ENCODE measurements at regions of chr12 and their contacts with region 1.

Region 1: DNA sequence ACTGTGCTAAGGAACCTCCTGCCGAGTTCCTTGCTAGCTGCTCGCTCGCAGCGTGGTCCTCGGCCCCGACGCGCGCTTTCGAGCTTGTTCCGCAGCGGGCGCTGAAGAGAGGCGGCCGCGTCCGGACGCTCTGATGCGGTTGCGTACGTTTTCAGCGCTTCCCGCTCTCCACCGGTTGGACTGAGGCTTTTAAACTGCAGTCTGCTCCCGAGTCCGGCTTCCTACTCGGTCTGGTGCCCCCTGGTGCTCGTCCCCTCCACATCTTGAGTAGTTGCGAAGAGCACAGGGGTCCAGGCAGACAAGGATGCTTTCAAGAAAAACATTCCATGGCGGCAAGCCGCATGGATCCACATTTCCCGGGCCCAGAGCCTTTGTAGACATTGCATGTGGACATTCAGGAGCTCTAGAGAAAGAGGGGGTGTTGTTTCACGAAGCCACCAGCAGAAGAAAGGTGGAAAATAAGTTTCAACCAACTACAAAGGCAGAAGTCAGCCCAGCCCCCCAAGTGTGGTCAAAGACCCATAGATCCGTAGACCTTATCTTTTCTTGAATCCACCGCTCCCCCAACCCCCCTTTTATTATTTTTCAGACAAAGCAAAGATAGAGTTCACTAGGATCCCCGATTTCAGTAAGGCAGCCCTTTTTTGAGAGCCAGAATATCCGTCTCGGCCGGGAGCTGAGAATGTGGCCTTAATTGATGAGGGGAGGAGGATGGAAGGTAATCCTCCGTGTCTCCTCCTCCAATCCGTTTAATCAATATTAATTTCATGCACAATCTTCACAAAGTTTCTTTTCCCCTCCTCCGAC is 984 bp upstream of the WNK1 start:
- DNase-seq: peak; percentile 93
- H3K4me3 Mint-ChIP-seq: no peak overlapping the region
- H3K27ac Mint-ChIP-seq: no peak overlapping the region
- H3K4me1 Mint-ChIP-seq: peaks cover 26% of the 10 kb centered on the region
- H3K27me3 Mint-ChIP-seq: no peaks in the 10 kb centered on the region

Region 2: DNA sequence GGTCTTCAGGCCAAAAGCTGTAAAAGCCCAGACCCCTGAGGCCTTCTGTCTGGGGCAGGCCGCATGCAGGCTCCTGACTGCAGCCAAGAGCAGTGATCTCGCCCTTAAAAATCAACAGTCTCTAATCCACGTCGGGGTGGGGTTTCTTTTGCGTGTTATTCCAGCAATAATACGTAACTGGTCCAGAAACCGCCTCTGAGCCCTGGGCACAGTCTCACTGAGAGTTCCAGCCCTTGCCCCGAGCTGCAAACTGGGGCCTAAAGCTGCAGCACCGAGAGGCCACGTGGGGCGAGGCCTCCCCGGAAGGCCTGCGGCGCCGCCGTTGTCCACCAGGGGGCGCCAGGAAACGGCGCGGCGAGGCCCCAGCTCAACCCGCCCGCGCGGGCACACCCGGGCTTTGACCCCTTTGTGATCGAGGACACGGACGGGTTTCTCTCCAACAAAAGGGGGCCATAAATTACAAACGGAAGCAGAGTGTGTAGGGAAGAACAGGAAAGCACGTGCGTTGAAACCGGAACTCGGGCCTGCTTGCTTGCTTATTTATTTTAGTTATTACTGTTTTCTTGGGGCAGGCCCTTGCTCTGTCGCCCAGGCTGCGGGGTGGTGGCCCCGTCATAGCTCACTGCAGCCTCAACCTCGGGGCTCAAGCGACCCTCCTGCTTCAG is 175.3 kb before region 1 on chr12:
- CTCF ChIA-PET with region 1: interaction called, 118 read pairs
- POLR2A ChIA-PET with region 1: interaction called, 64 read pairs
- DNase-seq: peak; percentile 88
- H3K4me3 Mint-ChIP-seq: peak overlapping the region; percentile 19
- H3K27ac Mint-ChIP-seq: peak overlapping the region; percentile 59
- H3K4me1 Mint-ChIP-seq: peaks cover 50% of the 10 kb centered on the region
- H3K27me3 Mint-ChIP-seq: peaks cover 2% of the 10 kb centered on the region

Region 3: DNA sequence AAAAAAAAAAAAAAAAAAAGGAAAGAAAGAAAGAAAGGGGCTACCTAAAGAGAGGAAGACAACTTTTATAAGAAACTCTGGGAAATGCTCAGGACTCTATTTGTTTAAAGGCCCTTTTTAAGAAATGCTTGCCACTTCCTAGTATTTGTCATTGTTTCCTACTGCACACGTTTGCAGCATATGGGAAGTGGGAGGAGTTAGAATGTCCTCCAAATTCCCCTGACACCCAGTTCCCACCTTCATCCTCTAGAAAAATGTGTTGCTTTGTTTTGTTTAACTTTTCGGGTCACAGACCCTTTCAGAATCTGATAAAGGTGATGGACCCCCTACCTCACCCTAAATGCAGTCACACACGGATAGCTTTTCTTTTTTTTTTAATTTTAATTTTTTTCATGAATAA is 129.0 kb before region 1 on chr12:
- CTCF ChIA-PET with region 1: interaction called, 14 read pairs
- POLR2A ChIA-PET with region 1: interaction called, 12 read pairs
- DNase-seq: no peak
- H3K4me3 Mint-ChIP-seq: no peak overlapping the region
- H3K27ac Mint-ChIP-seq: peak overlapping the region; percentile 78
- H3K4me1 Mint-ChIP-seq: peaks cover 51% of the 10 kb centered on the region
- H3K27me3 Mint-ChIP-seq: no peaks in the 10 kb centered on the region

Region 4: DNA sequence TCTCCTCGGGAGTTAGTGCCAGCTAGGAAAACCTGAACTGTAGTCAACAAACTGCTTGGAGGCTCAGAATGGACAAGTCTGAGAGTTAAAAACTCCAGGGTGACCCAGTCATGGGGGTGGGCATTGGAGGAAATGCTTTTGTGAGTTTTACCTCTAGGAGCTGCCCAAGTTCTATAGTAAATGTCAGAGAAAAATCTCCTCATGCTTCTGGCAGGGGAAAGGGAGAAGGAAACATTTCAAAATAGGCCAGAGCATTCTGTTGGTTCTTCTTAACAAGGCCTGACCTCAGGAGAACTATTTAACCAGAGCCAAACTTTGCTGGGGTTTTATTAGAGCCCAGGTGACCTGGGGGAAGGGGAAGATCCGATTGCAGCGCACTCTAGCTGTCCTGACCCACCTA is 100.4 kb before region 1 on chr12:
- CTCF ChIA-PET with region 1: interaction called, 39 read pairs
- POLR2A ChIA-PET with region 1: no interaction called
- DNase-seq: no peak
- H3K4me3 Mint-ChIP-seq: no peak overlapping the region
- H3K27ac Mint-ChIP-seq: no peak overlapping the region
- H3K4me1 Mint-ChIP-seq: peaks cover 6% of the 10 kb centered on the region
- H3K27me3 Mint-ChIP-seq: peaks cover 4% of the 10 kb centered on the region

Region 5: GRCh38 chr12:685388-685787 is 66.0 kb before region 1 on chr12:
- CTCF ChIA-PET with region 1: interaction called, 32 read pairs
- POLR2A ChIA-PET with region 1: interaction called, 51 read pairs
- DNase-seq: peak; percentile 90
- H3K4me3 Mint-ChIP-seq: peak overlapping the region; percentile 37
- H3K27ac Mint-ChIP-seq: peak overlapping the region; percentile 91
- H3K4me1 Mint-ChIP-seq: peaks cover 35% of the 10 kb centered on the region
- H3K27me3 Mint-ChIP-seq: no peaks in the 10 kb centered on the region

Region 6: GRCh38 chr12:779745-780734 is 28.6 kb after region 1 on chr12:
- CTCF ChIA-PET with region 1: interaction called, 7 read pairs
- POLR2A ChIA-PET with region 1: interaction called, 22 read pairs
- DNase-seq: no peak
- H3K4me3 Mint-ChIP-seq: peak overlapping the region; percentile 65
- H3K27ac Mint-ChIP-seq: peak overlapping the region; percentile 41
- H3K4me1 Mint-ChIP-seq: peaks cover 61% of the 10 kb centered on the region
- H3K27me3 Mint-ChIP-seq: no peaks in the 10 kb centered on the region

Region 7: DNA sequence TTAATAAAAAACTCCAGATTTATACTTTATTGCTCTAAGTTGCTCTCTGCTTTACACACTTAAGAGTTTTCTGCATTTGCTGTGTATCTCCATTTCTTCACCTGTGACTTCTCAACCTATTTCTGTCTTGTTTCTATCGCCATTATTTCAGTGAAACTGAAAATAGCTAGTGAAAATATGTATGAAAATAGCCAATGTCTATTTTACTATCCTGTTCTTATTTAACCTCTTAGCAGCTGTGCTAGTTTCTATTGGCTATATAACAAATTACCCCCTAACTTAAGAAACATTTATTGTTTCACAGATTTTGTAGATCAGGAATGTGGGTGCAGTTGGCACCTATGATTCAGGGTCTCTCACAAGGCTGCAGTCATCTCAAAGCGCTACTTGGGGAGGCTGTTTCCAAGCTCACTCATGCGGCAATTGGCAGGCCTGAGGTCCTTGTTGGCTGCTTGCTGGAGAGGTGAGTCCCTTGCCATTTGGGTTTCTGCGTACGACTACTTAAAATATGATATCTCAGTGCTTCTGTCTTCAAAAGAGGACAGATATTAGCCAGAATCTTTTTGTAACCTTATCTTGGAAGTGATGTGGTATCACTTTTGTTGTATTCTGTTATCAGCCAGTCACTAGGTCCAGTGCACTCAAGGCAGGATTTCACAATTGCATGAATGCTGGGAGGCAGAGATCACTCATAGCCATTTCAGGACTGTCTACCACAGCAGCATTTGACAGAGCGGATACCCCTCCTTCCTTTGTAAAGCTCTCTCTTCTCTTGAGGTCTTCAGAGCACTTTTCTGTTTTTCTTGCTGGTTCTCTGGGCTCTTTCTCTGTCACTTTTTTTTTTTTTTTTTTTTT is 246.9 kb after region 1 on chr12:
- CTCF ChIA-PET with region 1: no interaction called
- POLR2A ChIA-PET with region 1: no interaction called
- DNase-seq: no peak
- H3K4me3 Mint-ChIP-seq: no peak overlapping the region
- H3K27ac Mint-ChIP-seq: no peak overlapping the region
- H3K4me1 Mint-ChIP-seq: peaks cover 20% of the 10 kb centered on the region
- H3K27me3 Mint-ChIP-seq: no peaks in the 10 kb centered on the region

Measured in activated CD4-positive, alpha-beta memory T cell treated with anti-CD3 and anti-CD28 coated beads, Interleukin-2, amount 10 ng/mL, durations not matched to agents 7 days and 5 days (primary cell).